Transverse colon (tissue), 4 donors: ENCODE measurements at regions of chr16 and their contacts with region 1.

Region 1: GRCh38 chr16:89210904-89211515 is 6.5 kb upstream of the ZNF778 start:
- DNase-seq: no peak
- H3K4me3 ChIP-seq: no peak overlapping the region
- H3K27ac ChIP-seq: peak overlapping the region in 1 of 4 donors; percentile 26
- H3K4me1 ChIP-seq: peaks cover 2 to 12% (median 5%) of the 10 kb centered on the region in 4 donors
- H3K27me3 ChIP-seq: peaks cover 10% of the 10 kb centered on the region
- CTCF ChIP-seq: no peak
- EP300 ChIP-seq: no peak
- POLR2A ChIP-seq: no peak

Region 2: DNA sequence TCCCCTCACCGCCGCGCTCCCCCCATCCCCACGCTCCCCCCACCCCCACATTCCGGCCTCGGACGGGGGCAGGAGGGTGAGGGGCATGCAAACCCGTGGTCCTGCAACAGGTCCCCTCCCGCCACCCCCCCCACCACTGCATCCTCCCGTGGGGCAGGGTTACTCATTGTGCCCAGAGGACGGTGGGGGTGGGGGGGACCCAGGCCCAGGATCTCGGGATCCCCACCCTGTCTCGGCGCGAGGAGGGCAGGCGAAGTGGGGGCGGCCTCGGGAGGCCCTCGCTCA is 19.2 kb before region 1 on chr16:
- in situ Hi-C with region 1: no loop called
- intact Hi-C with region 1: loop called (anchors 1 kb)
- DNase-seq: no peak
- H3K4me3 ChIP-seq: peak overlapping the region in 3 of 4 donors; percentile 24 to 42 (median 34)
- H3K27ac ChIP-seq: no peak overlapping the region
- H3K4me1 ChIP-seq: peaks cover 0 to 9% (median 5%) of the 10 kb centered on the region in 4 donors
- H3K27me3 ChIP-seq: peaks cover 13% of the 10 kb centered on the region
- CTCF ChIP-seq: no peak
- EP300 ChIP-seq: no peak
- POLR2A ChIP-seq: no peak